ENCODE measurements at regions of chr7 and their contacts with region 1.

Region 1: DNA sequence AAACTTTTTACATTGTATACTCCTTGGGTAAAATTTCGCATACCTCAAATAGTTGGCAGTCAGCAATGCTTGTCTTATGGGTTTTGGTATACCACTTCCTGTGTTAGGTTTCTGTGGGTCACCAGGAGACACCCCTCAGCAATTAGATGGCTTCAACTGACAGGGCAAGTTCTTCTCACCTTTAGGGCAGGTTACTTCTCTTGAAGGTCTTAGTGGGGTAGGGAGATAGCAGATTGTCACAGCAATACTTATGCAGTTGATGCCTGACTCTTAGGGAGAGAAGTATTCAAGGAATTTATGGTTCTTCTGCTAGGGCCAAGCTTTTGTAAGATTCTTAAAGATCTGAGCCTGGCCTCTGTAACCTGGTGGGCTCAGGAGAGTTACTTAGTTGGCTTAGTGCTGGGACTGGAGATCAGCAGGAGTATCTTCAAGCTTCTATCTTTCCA is 42.9 kb downstream of the MKLN1 start:
- DNase-seq: no peak
- H3K4me3 ChIP-seq: no peak overlapping the region
- H3K27me3 ChIP-seq: no peaks in the 10 kb centered on the region
- CTCF ChIP-seq: no peak

Region 2: DNA sequence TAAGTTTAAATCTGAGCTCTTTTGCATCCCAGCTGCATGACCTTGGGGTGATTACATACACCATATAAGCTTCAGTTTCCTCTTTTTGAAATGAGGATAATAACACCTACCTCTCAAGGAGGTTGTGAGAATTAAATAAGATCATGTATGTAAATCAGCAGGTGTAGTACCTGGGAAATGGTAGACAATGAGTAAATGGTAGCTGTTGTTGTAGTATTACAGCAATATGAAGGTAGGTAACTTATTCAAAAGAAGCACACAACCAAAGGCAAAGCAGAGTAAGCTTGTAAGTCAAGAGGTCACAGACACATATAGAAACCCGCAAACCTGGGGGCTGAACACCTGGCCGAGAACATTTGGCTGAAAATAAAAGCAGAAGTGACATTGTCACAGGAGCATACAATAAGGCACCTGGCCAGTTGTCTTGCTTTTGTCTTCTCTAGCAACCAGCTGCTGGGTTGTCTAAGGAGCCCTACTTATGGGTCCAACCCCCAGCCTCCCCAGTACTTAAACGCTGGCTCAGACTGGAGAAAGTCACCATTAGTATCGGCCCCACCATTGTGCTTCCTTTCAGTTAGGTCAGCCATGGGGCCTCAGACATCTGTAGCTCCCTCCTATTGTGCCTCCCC is 246.4 kb before region 1 on chr7:
- CTCF ChIA-PET with region 1: no interaction called
- POLR2A ChIA-PET with region 1: no interaction called
- DNase-seq: no peak
- H3K4me3 ChIP-seq: no peak overlapping the region
- H3K27me3 ChIP-seq: no peaks in the 10 kb centered on the region
- CTCF ChIP-seq: no peak

Region 3: DNA sequence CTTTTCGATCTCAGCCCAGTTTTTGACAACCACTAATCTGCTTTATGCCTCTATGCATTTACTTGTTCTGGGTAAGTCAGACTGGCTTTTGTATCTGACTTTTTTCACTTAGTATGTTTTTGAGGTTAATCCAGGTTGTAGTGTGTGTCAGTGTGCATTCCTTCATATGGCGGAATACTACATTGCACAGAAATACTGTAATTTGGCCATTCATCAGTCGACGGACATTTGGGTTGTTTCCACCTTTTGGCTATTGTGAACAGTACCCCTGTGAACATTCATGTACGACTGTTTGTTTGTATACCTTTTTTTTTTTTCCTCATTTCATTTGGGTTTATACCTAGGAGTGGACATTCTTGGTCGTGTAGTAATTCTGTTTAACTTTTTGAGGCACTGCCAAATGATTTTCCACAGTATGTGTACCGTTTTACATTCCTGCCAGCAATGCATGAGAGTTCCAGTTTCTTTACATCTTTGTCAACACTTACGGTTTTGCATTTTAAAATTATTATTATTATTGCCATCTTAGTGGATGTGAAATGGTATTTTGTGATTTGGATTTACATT is 14.6 kb after region 1 on chr7:
- CTCF ChIA-PET with region 1: interaction called, 3 read pairs
- POLR2A ChIA-PET with region 1: interaction called, 20 read pairs
- DNase-seq: no peak
- H3K4me3 ChIP-seq: no peak overlapping the region
- H3K27me3 ChIP-seq: no peaks in the 10 kb centered on the region
- CTCF ChIP-seq: no peak

Measured in BJ (cell line).